ENCODE measurements at regions of chr14 and their contacts with region 1.

Region 1: DNA sequence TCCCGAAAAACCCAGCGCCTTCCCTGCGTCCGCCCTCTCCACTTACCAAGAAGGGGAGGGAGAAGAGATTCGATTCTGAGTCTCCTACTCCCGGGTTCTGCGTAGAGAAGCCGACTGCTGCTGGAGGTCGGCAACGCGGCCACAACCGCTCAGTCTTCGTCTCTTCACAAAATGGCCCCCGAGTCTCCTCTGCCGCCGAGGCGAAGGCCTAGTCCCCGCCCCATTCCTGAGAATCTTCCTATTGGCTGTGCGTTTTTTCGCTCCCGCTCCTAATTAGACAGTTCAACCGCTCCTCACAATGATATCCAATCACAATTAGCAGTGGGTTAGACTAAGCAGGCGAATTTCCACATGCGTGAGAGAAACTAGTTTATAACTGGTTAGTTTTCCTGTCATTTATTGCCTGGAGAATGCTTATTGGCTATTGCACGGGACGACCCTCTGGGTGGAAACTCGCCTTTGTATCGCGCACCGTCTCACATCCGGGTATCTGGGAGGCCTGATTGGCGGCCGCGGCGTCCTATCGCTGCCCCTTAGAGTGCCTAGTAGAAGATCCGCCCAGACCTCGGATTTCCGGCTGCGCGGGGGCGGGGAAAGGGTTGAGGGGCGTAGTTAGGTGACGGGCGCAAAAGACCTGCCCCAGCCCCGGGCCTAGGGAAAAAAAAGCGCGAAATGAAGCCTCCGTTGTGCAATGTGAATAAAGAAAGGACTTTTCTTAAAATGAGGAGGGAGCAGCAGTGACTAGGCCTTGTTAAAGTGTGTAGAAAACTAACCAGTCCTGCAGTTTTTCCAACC is at the start of gene HNRNPC:
- DNase-seq: peak; percentile 100
- ATAC-seq: peak; percentile 90
- H3K4me3 ChIP-seq: peak within 1 kb of the TSS; percentile 99
- H3K4me3 Mint-ChIP-seq: peak within 1 kb of the TSS; percentile 92 to 100 (median 99)
- H3K27ac ChIP-seq: peak within 1 kb of the TSS; percentile 97
- H3K27ac Mint-ChIP-seq: peak within 1 kb of the TSS; percentile 97 to 100 (median 100)
- H3K4me1 ChIP-seq: peaks cover 19 to 21% of the 10 kb centered on the region in 2 donors
- H3K4me1 Mint-ChIP-seq: peaks cover 21 to 43% (median 37%) of the 10 kb centered on the region in 7 donors
- H3K27me3 ChIP-seq: no peaks in the 10 kb centered on the region
- H3K27me3 Mint-ChIP-seq: no peaks in the 10 kb centered on the region
- total RNA-seq, gene HNRNPC: 469 to 687 (median 532) TPM

Region 2: GRCh38 chr14:20461274-20462001 is 808.0 kb before region 1 on chr14 and contains the start of gene PIP4P1:
- CTCF ChIA-PET with region 1: no interaction called
- POLR2A ChIA-PET with region 1: no interaction called
- intact Hi-C with region 1: loop called in 1 of 2 experiments (anchors 1 kb)
- DNase-seq: peak; percentile 95 to 100 (median 99)
- ATAC-seq: peak; percentile 92
- H3K4me3 ChIP-seq: peak within 1 kb of the TSS; percentile 83
- H3K4me3 Mint-ChIP-seq: peak within 1 kb of the TSS; percentile 81 to 97 (median 92)
- H3K27ac ChIP-seq: peak within 1 kb of the TSS; percentile 96
- H3K27ac Mint-ChIP-seq: peak within 1 kb of the TSS; percentile 88 to 99 (median 92)
- H3K4me1 ChIP-seq: peaks cover 20 to 21% of the 10 kb centered on the region in 2 donors
- H3K4me1 Mint-ChIP-seq: peaks cover 18 to 36% (median 32%) of the 10 kb centered on the region in 7 donors
- H3K27me3 ChIP-seq: no peaks in the 10 kb centered on the region
- H3K27me3 Mint-ChIP-seq: peaks cover 0 to 2% (median 0%) of the 10 kb centered on the region in 5 donors
- total RNA-seq, gene PIP4P1: 34.9 to 87.1 (median 74.2) TPM

Region 3: GRCh38 chr14:21133901-21134300 is 135.5 kb before region 1 on chr14:
- CTCF ChIA-PET with region 1: no interaction called
- POLR2A ChIA-PET with region 1: no interaction called
- intact Hi-C with region 1: no loop called
- DNase-seq: no peak
- ATAC-seq: no peak
- H3K4me3 ChIP-seq: no peak overlapping the region
- H3K4me3 Mint-ChIP-seq: no peak overlapping the region
- H3K27ac ChIP-seq: no peak overlapping the region
- H3K27ac Mint-ChIP-seq: no peak overlapping the region
- H3K4me1 ChIP-seq: no peaks in the 10 kb centered on the region
- H3K4me1 Mint-ChIP-seq: peaks cover 0 to 1% (median 0%) of the 10 kb centered on the region in 7 donors
- H3K27me3 ChIP-seq: no peaks in the 10 kb centered on the region
- H3K27me3 Mint-ChIP-seq: peaks cover 0 to 13% (median 0%) of the 10 kb centered on the region in 5 donors

Region 4: DNA sequence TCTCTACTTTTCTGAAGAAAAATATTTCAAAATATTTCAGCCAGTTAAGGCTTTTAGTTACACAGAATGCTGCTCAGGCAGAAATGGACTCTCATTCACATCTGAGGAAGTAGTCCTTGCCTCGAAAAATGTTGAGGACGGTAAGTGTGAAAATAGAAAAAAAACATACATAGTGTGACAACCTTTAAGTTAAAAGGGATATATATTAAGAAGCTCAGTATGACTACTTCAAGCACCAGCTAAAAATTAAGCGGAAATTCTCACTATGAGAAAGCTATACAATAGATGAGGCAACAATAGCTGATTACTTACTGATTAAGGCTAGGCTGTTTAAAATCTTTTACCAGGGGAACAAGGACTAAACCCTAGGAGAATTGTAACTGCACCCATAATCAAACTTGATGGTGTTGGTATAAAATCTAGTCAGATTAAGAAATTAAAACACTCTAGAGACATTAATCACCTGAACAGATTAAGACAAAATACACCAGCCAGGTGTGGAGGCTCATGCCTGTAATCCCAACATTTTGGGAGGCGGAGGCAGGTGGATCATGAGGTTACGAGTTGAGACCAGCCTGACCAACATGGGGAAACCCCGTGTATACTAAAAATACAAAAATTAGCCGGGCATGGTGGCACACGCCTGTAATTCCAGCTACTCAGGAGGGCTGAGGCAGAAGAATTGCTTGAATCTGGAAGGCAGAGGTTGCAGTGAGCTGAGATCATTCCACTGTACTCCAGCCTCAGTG is 54.1 kb before region 1 on chr14:
- CTCF ChIA-PET with region 1: no interaction called
- POLR2A ChIA-PET with region 1: interaction called, 5 read pairs
- intact Hi-C with region 1: loop called in 1 of 2 experiments (anchors 10 kb)
- DNase-seq: no peak
- ATAC-seq: no peak
- H3K4me3 ChIP-seq: no peak overlapping the region
- H3K4me3 Mint-ChIP-seq: peak overlapping the region in 9 of 10 donors; percentile 31 to 72 (median 56)
- H3K27ac ChIP-seq: peak overlapping the region; percentile 46
- H3K27ac Mint-ChIP-seq: peak overlapping the region; percentile 52 to 94 (median 81)
- H3K4me1 ChIP-seq: peaks cover 38 to 46% of the 10 kb centered on the region in 2 donors
- H3K4me1 Mint-ChIP-seq: peaks cover 36 to 86% (median 67%) of the 10 kb centered on the region in 7 donors
- H3K27me3 ChIP-seq: no peaks in the 10 kb centered on the region
- H3K27me3 Mint-ChIP-seq: no peaks in the 10 kb centered on the region

Region 5: DNA sequence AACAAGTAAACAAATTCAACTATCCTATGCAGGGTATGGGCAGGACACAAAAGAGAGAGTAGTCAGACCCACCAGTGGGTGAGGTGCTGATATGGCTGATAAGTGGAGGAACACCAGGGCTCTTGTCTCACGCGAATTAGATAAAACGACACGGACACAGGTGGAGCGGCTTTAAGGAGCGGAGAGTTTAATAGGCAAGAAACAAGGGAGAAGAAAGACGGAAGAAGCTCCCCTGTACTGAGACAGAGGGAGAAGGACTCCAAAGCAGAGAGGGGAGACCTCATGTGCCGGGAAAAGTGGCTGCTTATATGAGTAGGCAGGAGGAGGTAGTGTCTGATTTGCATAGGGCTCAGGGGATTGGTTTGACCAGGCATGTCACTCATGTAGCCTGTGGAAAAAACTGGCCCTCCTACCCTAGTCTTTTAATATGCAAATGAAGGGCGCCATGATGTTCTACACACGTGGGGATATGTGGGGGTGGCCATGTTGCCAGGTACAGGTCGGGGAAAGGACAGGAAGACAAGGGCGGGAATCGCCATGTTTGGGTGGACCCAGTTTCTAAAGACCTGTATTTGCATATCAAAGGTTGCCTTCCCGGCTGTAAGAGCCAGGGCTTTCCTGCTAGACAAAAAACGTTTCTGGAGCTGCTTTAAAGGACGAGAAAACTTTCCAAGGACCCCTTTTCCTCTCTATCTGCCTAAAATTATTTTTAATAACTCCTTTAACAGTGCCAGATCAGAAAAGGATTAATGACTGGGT is 39.2 kb after region 1 on chr14:
- CTCF ChIA-PET with region 1: no interaction called
- POLR2A ChIA-PET with region 1: interaction called, 10 read pairs
- intact Hi-C with region 1: loop called (anchors 1 kb)
- DNase-seq: peak; percentile 20 to 82 (median 78)
- ATAC-seq: peak; percentile 91
- H3K4me3 ChIP-seq: peak overlapping the region; percentile 63
- H3K4me3 Mint-ChIP-seq: peak overlapping the region; percentile 68 to 88 (median 83)
- H3K27ac ChIP-seq: peak overlapping the region; percentile 64
- H3K27ac Mint-ChIP-seq: peak overlapping the region; percentile 63 to 95 (median 82)
- H3K4me1 ChIP-seq: peaks cover 5 to 10% of the 10 kb centered on the region in 2 donors
- H3K4me1 Mint-ChIP-seq: peaks cover 7 to 24% (median 18%) of the 10 kb centered on the region in 7 donors
- H3K27me3 ChIP-seq: no peaks in the 10 kb centered on the region
- H3K27me3 Mint-ChIP-seq: peaks cover 0 to 17% (median 0%) of the 10 kb centered on the region in 5 donors

Region 6: GRCh38 chr14:21455911-21456667 is 186.6 kb after region 1 on chr14 and contains the start of gene CHD8:
- CTCF ChIA-PET with region 1: no interaction called
- POLR2A ChIA-PET with region 1: no interaction called
- intact Hi-C with region 1: loop called (anchors 1 kb)
- DNase-seq: peak; percentile 95 to 100 (median 100)
- ATAC-seq: peak; percentile 98
- H3K4me3 ChIP-seq: peak within 1 kb of the TSS; percentile 91
- H3K4me3 Mint-ChIP-seq: peak within 1 kb of the TSS; percentile 89 to 100 (median 98)
- H3K27ac ChIP-seq: peak within 1 kb of the TSS; percentile 94
- H3K27ac Mint-ChIP-seq: peak within 1 kb of the TSS; percentile 96 to 100 (median 99)
- H3K4me1 ChIP-seq: peaks cover 17 to 21% of the 10 kb centered on the region in 2 donors
- H3K4me1 Mint-ChIP-seq: peaks cover 18 to 48% (median 41%) of the 10 kb centered on the region in 7 donors
- H3K27me3 ChIP-seq: no peaks in the 10 kb centered on the region
- H3K27me3 Mint-ChIP-seq: no peaks in the 10 kb centered on the region
- total RNA-seq, gene CHD8: 125 to 143 (median 133) TPM

Region 7: GRCh38 chr14:21557084-21557901 is 287.8 kb after region 1 on chr14:
- CTCF ChIA-PET with region 1: no interaction called
- POLR2A ChIA-PET with region 1: no interaction called
- intact Hi-C with region 1: loop called in 1 of 2 experiments (anchors 10 kb)
- DNase-seq: peak; percentile 25 to 81 (median 74)
- ATAC-seq: peak; percentile 84
- H3K4me3 ChIP-seq: peak overlapping the region; percentile 27
- H3K4me3 Mint-ChIP-seq: peak overlapping the region in 9 of 10 donors; percentile 14 to 71 (median 46)
- H3K27ac ChIP-seq: peak overlapping the region; percentile 24
- H3K27ac Mint-ChIP-seq: peak overlapping the region in 8 of 9 donors; percentile 6 to 92 (median 64)
- H3K4me1 ChIP-seq: peaks cover 0 to 4% of the 10 kb centered on the region in 2 donors
- H3K4me1 Mint-ChIP-seq: peaks cover 2 to 12% (median 7%) of the 10 kb centered on the region in 7 donors
- H3K27me3 ChIP-seq: no peaks in the 10 kb centered on the region
- H3K27me3 Mint-ChIP-seq: peaks cover 0 to 2% (median 0%) of the 10 kb centered on the region in 5 donors

Region 8: GRCh38 chr14:23095196-23096108 is 1826.0 kb after region 1 on chr14 and contains the start of gene C14orf119:
- CTCF ChIA-PET with region 1: no interaction called
- POLR2A ChIA-PET with region 1: no interaction called
- intact Hi-C with region 1: loop called in 1 of 2 experiments (anchors 5 kb)
- DNase-seq: peak in 8 of 9 donors; percentile 88 to 100 (median 100)
- ATAC-seq: peak; percentile 93
- H3K4me3 ChIP-seq: peak within 1 kb of the TSS; percentile 88
- H3K4me3 Mint-ChIP-seq: no peak within 1 kb of the TSS
- H3K27ac ChIP-seq: peak within 1 kb of the TSS; percentile 97
- H3K27ac Mint-ChIP-seq: no peak within 1 kb of the TSS
- H3K4me1 ChIP-seq: peaks cover 26 to 32% of the 10 kb centered on the region in 2 donors
- H3K4me1 Mint-ChIP-seq: peaks cover 3 to 63% (median 33%) of the 10 kb centered on the region in 7 donors
- H3K27me3 ChIP-seq: no peaks in the 10 kb centered on the region
- H3K27me3 Mint-ChIP-seq: no peaks in the 10 kb centered on the region
- total RNA-seq, gene C14orf119: 6.0 to 49.9 (median 43.4) TPM

Measured in naive thymus-derived CD4-positive, alpha-beta T cell (primary cell).